ENCODE measurements at regions of chr10 and their contacts with region 1.

Region 1: GRCh38 chr10:30608386-30608785 is 21.2 kb downstream of the LYZL2 start:
- DNase-seq: no peak
- H3K4me3 ChIP-seq: no peak overlapping the region
- H3K27ac ChIP-seq: no peak overlapping the region
- H3K4me1 ChIP-seq: peaks cover 35% of the 10 kb centered on the region
- H3K27me3 ChIP-seq: no peaks in the 10 kb centered on the region
- CTCF ChIP-seq: no peak

Region 2: DNA sequence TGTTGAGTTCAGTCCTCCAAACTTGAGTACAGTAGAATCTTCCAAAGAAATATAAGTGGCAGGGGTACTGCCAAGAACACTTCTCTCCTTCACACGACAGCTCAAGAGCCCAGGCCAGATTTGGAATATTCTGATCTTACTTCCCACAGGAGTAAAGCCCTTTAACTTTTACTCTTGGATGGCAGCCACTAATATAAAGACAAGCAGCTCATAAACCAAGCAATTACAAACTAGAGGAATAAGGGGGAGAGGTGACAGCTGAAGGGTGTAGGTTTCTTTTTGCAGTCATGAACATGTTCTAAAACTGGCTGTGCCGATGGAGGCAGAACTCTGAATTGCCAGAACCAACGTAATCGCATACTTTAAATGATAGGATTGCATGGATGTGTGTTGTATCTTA is 1048.4 kb before region 1 on chr10:
- CTCF ChIA-PET with region 1: no interaction called
- POLR2A ChIA-PET with region 1: no interaction called
- intact Hi-C with region 1: no loop called
- DNase-seq: no peak
- H3K4me3 ChIP-seq: no peak overlapping the region
- H3K27ac ChIP-seq: no peak overlapping the region
- H3K4me1 ChIP-seq: 0 out of 2 replicates have a peak, but pooled peaks cover 5% of the 10 kb centered on the region
- H3K27me3 ChIP-seq: no peaks in the 10 kb centered on the region
- CTCF ChIP-seq: no peak

Region 3: GRCh38 chr10:30309401-30309800 is 299.0 kb before region 1 on chr10:
- CTCF ChIA-PET with region 1: no interaction called
- POLR2A ChIA-PET with region 1: no interaction called
- intact Hi-C with region 1: no loop called
- DNase-seq: no peak
- H3K4me3 ChIP-seq: no peak overlapping the region
- H3K27ac ChIP-seq: no peak overlapping the region
- H3K4me1 ChIP-seq: no peaks in the 10 kb centered on the region
- H3K27me3 ChIP-seq: no peaks in the 10 kb centered on the region
- CTCF ChIP-seq: no peak

Region 4: GRCh38 chr10:30365251-30365632 is 243.1 kb before region 1 on chr10:
- CTCF ChIA-PET with region 1: interaction called, 11 read pairs
- POLR2A ChIA-PET with region 1: no interaction called
- intact Hi-C with region 1: no loop called
- DNase-seq: peak; percentile 84 to 89
- H3K4me3 ChIP-seq: no peak overlapping the region
- H3K27ac ChIP-seq: no peak overlapping the region
- H3K4me1 ChIP-seq: 0 out of 2 replicates have a peak, but pooled peaks cover 4% of the 10 kb centered on the region
- H3K27me3 ChIP-seq: no peaks in the 10 kb centered on the region
- CTCF ChIP-seq: no peak

Region 5: GRCh38 chr10:30662814-30663213 is 54.4 kb after region 1 on chr10:
- CTCF ChIA-PET with region 1: no interaction called
- POLR2A ChIA-PET with region 1: no interaction called
- intact Hi-C with region 1: no loop called
- DNase-seq: no peak
- H3K4me3 ChIP-seq: no peak overlapping the region
- H3K27ac ChIP-seq: no peak overlapping the region
- H3K4me1 ChIP-seq: no peaks in the 10 kb centered on the region
- H3K27me3 ChIP-seq: no peaks in the 10 kb centered on the region
- CTCF ChIP-seq: no peak

Measured in PC-9 (cell line).